WTC11 (cell line): ENCODE measurements at regions of chr12 and their contacts with region 1.

Region 1: GRCh38 chr12:57611108-57611809 is at the start of gene ARHGEF25:
- DNase-seq: peak; percentile 73
- ATAC-seq: peak; percentile 67
- H3K4me3 Mint-ChIP-seq: peak within 1 kb of the TSS; percentile 87
- H3K27ac Mint-ChIP-seq: no peak within 1 kb of the TSS
- H3K4me1 Mint-ChIP-seq: peaks cover 36% of the 10 kb centered on the region
- H3K27me3 Mint-ChIP-seq: peaks cover 53% of the 10 kb centered on the region
- CTCF ChIP-seq: no peak
- total RNA-seq, gene ARHGEF25: 11.9 to 19.0 TPM (median 17.2 TPM) in 3 replicates

Region 2: GRCh38 chr12:57069523-57069922 is 541.7 kb before region 1 on chr12:
- CTCF ChIA-PET with region 1: no interaction called
- POLR2A ChIA-PET with region 1: no interaction called
- DNase-seq: peak; percentile 50
- ATAC-seq: peak; percentile 99
- H3K4me3 Mint-ChIP-seq: no peak overlapping the region
- H3K27ac Mint-ChIP-seq: peak overlapping the region; percentile 34
- H3K4me1 Mint-ChIP-seq: no peaks in the 10 kb centered on the region
- H3K27me3 Mint-ChIP-seq: no peaks in the 10 kb centered on the region
- CTCF ChIP-seq: peak; percentile 64

Region 3: GRCh38 chr12:57627501-57628279 is 16.4 kb after region 1 on chr12:
- CTCF ChIA-PET with region 1: interaction called, 15 read pairs
- POLR2A ChIA-PET with region 1: no interaction called
- DNase-seq: peak; percentile 53
- ATAC-seq: peak; percentile 8
- H3K4me3 Mint-ChIP-seq: peak overlapping the region; percentile 64
- H3K27ac Mint-ChIP-seq: no peak overlapping the region
- H3K4me1 Mint-ChIP-seq: peaks cover 21% of the 10 kb centered on the region
- H3K27me3 Mint-ChIP-seq: peaks cover 100% of the 10 kb centered on the region
- CTCF ChIP-seq: no peak